CD8-positive, alpha-beta memory T cell (primary cell): ENCODE measurements at regions of chr2 and their contacts with region 1.

Region 1: DNA sequence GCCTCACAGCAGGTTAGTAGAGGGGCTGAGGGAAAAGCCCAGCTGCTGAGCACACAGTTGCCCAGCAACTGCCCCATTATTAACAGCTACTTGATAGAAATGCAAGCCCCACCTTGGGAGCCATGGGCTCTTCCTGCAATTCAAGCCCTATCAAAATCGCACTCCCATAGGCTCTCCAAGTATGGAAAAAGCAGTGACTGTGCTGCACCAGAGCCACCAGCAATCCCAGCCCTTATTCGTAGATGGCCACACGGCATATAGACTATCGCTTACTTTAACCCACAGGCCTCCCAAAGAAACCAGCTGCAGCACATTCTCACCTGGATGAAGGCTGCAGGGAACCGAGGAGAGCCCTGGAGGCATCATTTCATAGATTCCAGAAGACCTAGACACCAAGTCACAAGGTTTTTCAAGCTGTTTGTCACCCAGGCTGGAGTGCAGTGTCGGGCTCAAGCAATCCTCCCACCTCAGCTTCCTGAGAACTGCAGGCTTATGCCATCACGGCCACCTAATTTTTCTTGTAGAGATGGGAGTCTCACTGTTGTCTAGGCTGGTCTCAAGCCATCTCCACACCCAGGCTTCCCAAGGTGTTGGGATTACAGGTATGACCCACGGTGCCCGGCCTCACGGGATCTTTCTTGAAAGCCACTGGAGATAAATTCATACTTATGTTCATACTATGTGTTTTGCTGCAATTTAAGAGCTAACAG is 11.3 kb downstream of the NCL start:
- DNase-seq: peak in 1 of 5 donors; percentile 14
- H3K4me3 ChIP-seq: no peak overlapping the region
- H3K4me3 Mint-ChIP-seq: no peak overlapping the region
- H3K27ac ChIP-seq: no peak overlapping the region
- H3K27ac Mint-ChIP-seq: peak overlapping the region in 7 of 8 donors; percentile 14 to 81 (median 73)
- H3K4me1 ChIP-seq: no peaks in the 10 kb centered on the region
- H3K4me1 Mint-ChIP-seq: peaks cover 13 to 19% (median 18%) of the 10 kb centered on the region in 3 donors
- H3K27me3 ChIP-seq: no peaks in the 10 kb centered on the region
- H3K27me3 Mint-ChIP-seq: peaks cover 0 to 2% of the 10 kb centered on the region in 2 donors

Region 2: GRCh38 chr2:231068525-231069222 is 384.3 kb before region 1 on chr2:
- CTCF ChIA-PET with region 1: no interaction called
- POLR2A ChIA-PET with region 1: no interaction called
- DNase-seq: no peak
- H3K4me3 ChIP-seq: no peak overlapping the region
- H3K4me3 Mint-ChIP-seq: no peak overlapping the region
- H3K27ac ChIP-seq: no peak overlapping the region
- H3K27ac Mint-ChIP-seq: no peak overlapping the region
- H3K4me1 ChIP-seq: no peaks in the 10 kb centered on the region
- H3K4me1 Mint-ChIP-seq: peaks cover 0 to 11% (median 3%) of the 10 kb centered on the region in 3 donors
- H3K27me3 ChIP-seq: no peaks in the 10 kb centered on the region
- H3K27me3 Mint-ChIP-seq: no peaks in the 10 kb centered on the region

Region 3: DNA sequence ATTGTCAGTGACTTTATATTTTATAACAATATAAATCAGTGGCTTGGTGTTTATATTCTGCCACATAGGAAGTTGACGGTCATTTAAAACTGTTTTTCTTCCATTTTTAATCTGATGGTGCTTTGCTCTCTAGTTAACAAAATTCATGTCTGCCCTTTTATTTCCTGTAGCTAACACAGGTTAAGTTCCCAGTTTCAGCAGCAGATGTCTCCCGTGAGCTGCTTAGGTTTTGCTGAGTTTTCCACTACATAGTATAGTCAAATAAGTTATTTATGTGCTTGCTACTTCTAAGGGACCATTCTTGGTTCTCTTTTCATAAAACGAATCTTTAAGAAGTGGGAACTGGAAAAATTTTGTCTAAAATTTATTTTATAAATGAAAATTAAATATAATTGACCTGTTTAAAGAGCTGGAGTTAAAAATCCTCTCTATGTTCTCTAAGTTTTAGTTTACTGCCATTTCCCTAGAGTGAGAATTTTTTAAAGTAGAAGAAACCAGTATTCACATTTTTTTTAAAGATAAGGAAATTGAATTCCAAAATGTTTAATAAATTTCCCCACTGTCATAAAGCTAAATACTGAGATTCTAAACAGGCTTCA is 348.7 kb before region 1 on chr2:
- CTCF ChIA-PET with region 1: interaction called, 24 read pairs
- POLR2A ChIA-PET with region 1: no interaction called
- DNase-seq: peak; percentile 14 to 49 (median 23)
- H3K4me3 ChIP-seq: no peak overlapping the region
- H3K4me3 Mint-ChIP-seq: no peak overlapping the region
- H3K27ac ChIP-seq: no peak overlapping the region
- H3K27ac Mint-ChIP-seq: peak overlapping the region in 1 of 8 donors; percentile 11
- H3K4me1 ChIP-seq: no peaks in the 10 kb centered on the region
- H3K4me1 Mint-ChIP-seq: peaks cover 0 to 5% (median 4%) of the 10 kb centered on the region in 3 donors
- H3K27me3 ChIP-seq: no peaks in the 10 kb centered on the region
- H3K27me3 Mint-ChIP-seq: no peaks in the 10 kb centered on the region

Region 4: GRCh38 chr2:231315896-231316295 is 137.1 kb before region 1 on chr2:
- CTCF ChIA-PET with region 1: no interaction called
- POLR2A ChIA-PET with region 1: no interaction called
- DNase-seq: no peak
- H3K4me3 ChIP-seq: no peak overlapping the region
- H3K4me3 Mint-ChIP-seq: no peak overlapping the region
- H3K27ac ChIP-seq: no peak overlapping the region
- H3K27ac Mint-ChIP-seq: no peak overlapping the region
- H3K4me1 ChIP-seq: no peaks in the 10 kb centered on the region
- H3K4me1 Mint-ChIP-seq: no peaks in the 10 kb centered on the region
- H3K27me3 ChIP-seq: no peaks in the 10 kb centered on the region
- H3K27me3 Mint-ChIP-seq: peaks cover 7 to 10% of the 10 kb centered on the region in 2 donors

Region 5: GRCh38 chr2:231411831-231412617 is 40.9 kb before region 1 on chr2:
- CTCF ChIA-PET with region 1: interaction called, 10 read pairs
- POLR2A ChIA-PET with region 1: no interaction called
- DNase-seq: peak; percentile 49 to 77 (median 59)
- H3K4me3 ChIP-seq: no peak overlapping the region
- H3K4me3 Mint-ChIP-seq: peak overlapping the region; percentile 60 to 79 (median 69)
- H3K27ac ChIP-seq: no peak overlapping the region
- H3K27ac Mint-ChIP-seq: peak overlapping the region in 1 of 8 donors; percentile 42
- H3K4me1 ChIP-seq: peaks cover 12% of the 10 kb centered on the region
- H3K4me1 Mint-ChIP-seq: peaks cover 2 to 8% (median 5%) of the 10 kb centered on the region in 3 donors
- H3K27me3 ChIP-seq: peaks cover 15% of the 10 kb centered on the region
- H3K27me3 Mint-ChIP-seq: peaks cover 26 to 48% of the 10 kb centered on the region in 2 donors

Region 6: GRCh38 chr2:231436957-231437356 is 16.0 kb before region 1 on chr2:
- CTCF ChIA-PET with region 1: interaction called, 12 read pairs
- POLR2A ChIA-PET with region 1: no interaction called
- DNase-seq: no peak
- H3K4me3 ChIP-seq: no peak overlapping the region
- H3K4me3 Mint-ChIP-seq: no peak overlapping the region
- H3K27ac ChIP-seq: no peak overlapping the region
- H3K27ac Mint-ChIP-seq: peak overlapping the region in 1 of 8 donors; percentile 61
- H3K4me1 ChIP-seq: no peaks in the 10 kb centered on the region
- H3K4me1 Mint-ChIP-seq: peaks cover 0 to 5% (median 0%) of the 10 kb centered on the region in 3 donors
- H3K27me3 ChIP-seq: no peaks in the 10 kb centered on the region
- H3K27me3 Mint-ChIP-seq: no peaks in the 10 kb centered on the region

Region 7: DNA sequence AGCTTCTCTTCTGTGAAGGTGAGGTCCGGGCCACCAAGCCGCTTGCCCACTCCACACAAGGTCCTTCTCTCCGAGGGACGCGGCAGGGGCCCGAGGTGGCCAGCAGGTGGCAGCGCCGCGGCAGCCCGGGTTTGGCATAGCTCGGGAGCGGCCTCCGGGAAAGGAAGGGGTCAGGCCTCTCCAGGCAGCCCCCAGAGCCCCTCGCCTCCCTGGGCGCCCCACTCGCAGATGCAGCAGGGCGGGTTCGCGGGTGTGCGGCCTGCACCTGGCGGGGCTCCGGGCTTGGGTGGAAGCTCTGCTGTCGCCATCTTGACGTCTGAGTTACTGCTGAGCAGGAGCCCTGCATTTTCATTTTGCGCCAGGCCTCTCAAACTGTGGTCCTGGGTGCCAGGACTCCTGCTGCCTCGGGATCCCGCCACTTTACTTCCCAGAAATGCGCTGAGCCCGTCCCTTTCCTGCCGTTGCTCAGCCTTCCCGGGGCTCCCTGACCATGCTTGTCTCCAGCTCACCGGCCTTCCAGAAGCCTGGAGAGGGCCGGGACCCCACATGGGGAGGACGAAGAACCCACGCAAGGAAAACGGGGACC is 29.9 kb after region 1 on chr2:
- CTCF ChIA-PET with region 1: interaction called, 19 read pairs
- POLR2A ChIA-PET with region 1: no interaction called
- DNase-seq: peak; percentile 59 to 81 (median 64)
- H3K4me3 ChIP-seq: peak overlapping the region; percentile 64
- H3K4me3 Mint-ChIP-seq: peak overlapping the region; percentile 69 to 88 (median 78)
- H3K27ac ChIP-seq: peak overlapping the region; percentile 67
- H3K27ac Mint-ChIP-seq: peak overlapping the region; percentile 81 to 95 (median 90)
- H3K4me1 ChIP-seq: peaks cover 4% of the 10 kb centered on the region
- H3K4me1 Mint-ChIP-seq: peaks cover 4 to 18% (median 8%) of the 10 kb centered on the region in 3 donors
- H3K27me3 ChIP-seq: no peaks in the 10 kb centered on the region
- H3K27me3 Mint-ChIP-seq: peaks cover 0 to 2% of the 10 kb centered on the region in 2 donors